GM18951 (cell line): ENCODE measurements at regions of chr10 and their contacts with region 1.

Region 1: GRCh38 chr10:91758303-91759146 is 39.7 kb upstream of the TNKS2 start:
- POLR2A ChIP-seq: no peak

Region 2: DNA sequence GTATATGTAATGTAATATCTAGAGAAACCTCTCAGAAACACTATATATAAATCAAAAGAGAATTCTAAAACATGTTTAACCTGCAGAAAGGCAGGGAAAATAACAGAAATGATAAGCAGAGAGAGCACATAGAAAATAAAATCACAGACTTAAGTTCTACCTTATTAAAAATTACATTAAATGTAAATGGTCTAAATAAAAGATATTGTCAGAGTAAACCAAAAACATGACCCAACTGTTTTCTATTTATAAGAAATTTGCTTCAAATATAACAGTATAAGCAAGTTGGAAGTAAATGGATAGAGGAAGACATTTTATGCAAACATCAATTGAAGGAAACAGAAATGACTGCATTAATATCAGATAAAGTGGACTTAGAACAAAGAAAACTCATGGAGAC is 305.0 kb before region 1 on chr10:
- in situ Hi-C with region 1: no loop called
- POLR2A ChIP-seq: no peak

Region 3: DNA sequence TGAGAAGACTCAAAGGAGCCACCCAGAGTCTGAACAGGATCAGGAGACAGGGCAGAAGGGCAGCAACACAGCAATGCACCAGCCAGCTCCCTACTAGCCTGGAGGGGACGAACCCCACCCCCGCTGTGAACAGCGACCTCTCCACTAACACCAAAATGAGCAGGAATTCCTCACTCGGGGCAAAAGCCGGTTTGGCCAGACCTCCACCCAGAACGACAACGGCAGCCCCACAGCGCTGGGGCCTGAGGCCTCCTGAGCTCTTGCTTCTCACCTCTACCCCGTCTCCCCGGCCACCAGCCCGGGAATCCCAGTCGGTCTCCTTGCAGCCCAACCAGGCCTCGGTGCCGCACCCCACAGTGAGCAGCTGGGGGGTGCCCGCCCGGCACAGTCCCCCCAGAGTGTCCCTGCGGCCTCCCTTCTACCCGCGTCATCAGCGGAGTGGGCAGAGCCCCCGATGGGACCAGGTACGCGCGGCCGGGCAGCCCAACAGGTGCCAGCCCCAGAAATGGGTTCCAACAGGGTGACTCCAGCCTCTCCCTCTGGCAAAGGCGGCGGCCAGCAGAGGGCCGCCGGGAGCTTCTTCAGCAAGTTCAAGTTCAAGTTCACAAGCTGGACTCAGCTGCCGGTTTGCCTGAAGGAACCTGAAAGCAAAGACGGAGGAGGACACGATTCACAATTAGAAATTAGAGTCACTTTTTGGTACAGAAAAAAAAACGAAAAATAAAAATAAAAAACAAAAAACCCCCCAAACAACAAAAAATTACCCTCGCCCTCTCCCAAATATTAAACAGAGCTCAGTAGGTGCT is 661.4 kb after region 1 on chr10:
- in situ Hi-C with region 1: loop called (anchors 25 kb)
- POLR2A ChIP-seq: no peak